Mucosa of descending colon (tissue), 3 donors: ENCODE measurements at regions of chr2 and their contacts with region 1.

Region 1: DNA sequence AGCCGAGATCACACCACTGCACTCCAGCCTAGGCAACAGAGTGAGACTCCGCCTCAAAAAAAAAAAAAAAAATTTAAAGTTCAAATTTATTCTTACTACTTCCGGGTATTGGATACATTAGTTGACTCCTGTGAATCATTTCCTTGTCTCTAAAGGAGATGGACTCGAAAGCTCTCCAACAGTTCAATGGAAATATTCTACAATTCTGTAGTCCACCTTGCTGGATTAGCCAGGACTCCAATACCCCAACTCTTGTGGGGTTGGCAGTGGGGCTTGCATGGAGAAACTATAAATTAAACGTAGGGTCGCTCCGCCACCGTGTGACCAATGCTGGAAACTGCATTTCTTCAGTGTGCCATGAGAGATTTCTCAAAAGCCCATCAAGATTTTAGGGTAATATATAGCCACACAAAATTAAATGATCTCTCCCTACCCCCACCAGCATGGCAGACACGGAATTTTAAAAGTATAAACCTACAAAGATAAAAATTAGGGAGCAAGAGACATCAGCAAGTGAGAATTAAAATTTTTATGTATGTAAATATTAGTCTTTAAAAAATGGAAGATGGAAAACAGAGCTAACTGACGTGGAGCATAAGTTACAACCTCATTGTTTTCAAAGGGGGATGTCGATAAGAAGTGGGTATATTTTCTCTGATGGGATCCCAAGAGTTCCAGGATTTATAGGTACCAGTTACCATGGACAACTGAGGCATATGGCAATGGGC is 27.8 kb upstream of the GAREM2 start:
- DNase-seq: peak in 2 of 3 donors; percentile 65 to 81
- ATAC-seq: peak; percentile 74
- H3K4me3 ChIP-seq: no peak overlapping the region
- H3K4me1 ChIP-seq: no peaks in the 10 kb centered on the region
- CTCF ChIP-seq: no peak

Region 2: GRCh38 chr2:25991965-25992364 is 153.2 kb before region 1 on chr2:
- intact Hi-C with region 1: loop called (anchors 2 to 5 kb)
- DNase-seq: no peak
- ATAC-seq: peak; percentile 52
- H3K4me3 ChIP-seq: no peak overlapping the region
- H3K4me1 ChIP-seq: peaks cover 7% of the 10 kb centered on the region
- CTCF ChIP-seq: no peak